Psoas muscle (tissue), 8 donors: ENCODE measurements at regions of chr1 and their contacts with region 1.

Region 1: DNA sequence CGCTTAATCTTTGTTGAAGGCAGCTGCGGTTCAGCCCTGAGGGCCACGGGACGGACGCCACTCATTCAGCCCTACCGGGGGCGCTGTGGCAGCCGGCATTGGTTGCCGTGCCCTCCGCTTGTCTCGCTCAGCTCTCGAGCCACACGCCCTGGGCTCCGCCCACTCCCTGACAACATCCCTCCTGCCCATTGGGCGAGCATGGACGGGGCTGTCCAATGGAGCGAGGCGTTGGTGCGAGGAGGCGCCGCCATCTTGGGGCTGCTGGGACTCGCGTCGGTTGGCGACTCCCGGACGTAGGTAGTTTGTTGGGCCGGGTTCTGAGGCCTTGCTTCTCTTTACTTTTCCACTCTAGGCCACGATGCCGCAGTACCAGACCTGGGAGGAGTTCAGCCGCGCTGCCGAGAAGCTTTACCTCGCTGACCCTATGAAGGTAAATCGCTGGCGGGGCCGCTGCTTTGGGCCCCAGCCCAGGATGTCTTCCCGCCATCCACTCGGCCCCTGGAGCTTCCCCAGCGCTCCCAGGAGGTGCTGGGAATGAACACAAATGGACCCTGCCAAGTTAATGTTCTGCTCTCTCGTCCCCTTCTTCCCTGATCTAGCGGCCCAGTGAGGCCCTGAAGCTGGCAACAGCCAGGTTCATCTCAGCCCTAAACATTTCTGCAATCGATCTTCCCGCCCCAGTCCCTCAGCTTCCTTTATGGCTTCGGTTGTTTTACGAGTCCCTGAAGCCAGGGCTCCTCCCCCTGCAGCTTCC is at the start of gene SRP9:
- DNase-seq: peak; percentile 99 to 100
- ATAC-seq: peak; percentile 99 to 100 (median 100)
- H3K4me3 ChIP-seq: peak within 1 kb of the TSS; percentile 76
- H3K27ac ChIP-seq: peak within 1 kb of the TSS; percentile 89
- H3K4me1 ChIP-seq: peaks cover 40% of the 10 kb centered on the region
- H3K27me3 ChIP-seq: no peaks in the 10 kb centered on the region
- CTCF ChIP-seq: peak; percentile 82
- total RNA-seq, gene SRP9: 137 to 199 (median 154) TPM

Region 2: GRCh38 chr1:225809842-225810578 is 32.2 kb after region 1 on chr1 and contains the start of gene EPHX1:
- intact Hi-C with region 1: loop called (anchors 5 kb)
- DNase-seq: peak; percentile 91 to 93
- ATAC-seq: peak; percentile 81 to 85 (median 82)
- H3K4me3 ChIP-seq: peak within 1 kb of the TSS; percentile 90
- H3K27ac ChIP-seq: peak within 1 kb of the TSS; percentile 90
- H3K4me1 ChIP-seq: peaks cover 36% of the 10 kb centered on the region
- H3K27me3 ChIP-seq: no peaks in the 10 kb centered on the region
- CTCF ChIP-seq: peak; percentile 44
- total RNA-seq, gene EPHX1: 65.8 to 209 (median 98.1) TPM

Region 3: GRCh38 chr1:225834417-225835329 is 56.9 kb after region 1 on chr1:
- intact Hi-C with region 1: no loop called
- DNase-seq: peak; percentile 75 to 87
- ATAC-seq: peak; percentile 72 to 93 (median 84)
- H3K4me3 ChIP-seq: no peak overlapping the region
- H3K27ac ChIP-seq: peak overlapping the region; percentile 64
- H3K4me1 ChIP-seq: peaks cover 7% of the 10 kb centered on the region
- H3K27me3 ChIP-seq: no peaks in the 10 kb centered on the region
- CTCF ChIP-seq: no peak

Region 4: GRCh38 chr1:225845571-225846259 is 68.0 kb after region 1 on chr1:
- intact Hi-C with region 1: loop called (anchors 2 to 5 kb)
- DNase-seq: peak; percentile 82 to 90
- ATAC-seq: peak; percentile 75 to 89 (median 80)
- H3K4me3 ChIP-seq: no peak overlapping the region
- H3K27ac ChIP-seq: peak overlapping the region; percentile 30
- H3K4me1 ChIP-seq: no peaks in the 10 kb centered on the region
- H3K27me3 ChIP-seq: no peaks in the 10 kb centered on the region
- CTCF ChIP-seq: peak; percentile 68